SK-N-SH (cell line): ENCODE measurements at regions of chr7 and their contacts with region 1.

Region 1: DNA sequence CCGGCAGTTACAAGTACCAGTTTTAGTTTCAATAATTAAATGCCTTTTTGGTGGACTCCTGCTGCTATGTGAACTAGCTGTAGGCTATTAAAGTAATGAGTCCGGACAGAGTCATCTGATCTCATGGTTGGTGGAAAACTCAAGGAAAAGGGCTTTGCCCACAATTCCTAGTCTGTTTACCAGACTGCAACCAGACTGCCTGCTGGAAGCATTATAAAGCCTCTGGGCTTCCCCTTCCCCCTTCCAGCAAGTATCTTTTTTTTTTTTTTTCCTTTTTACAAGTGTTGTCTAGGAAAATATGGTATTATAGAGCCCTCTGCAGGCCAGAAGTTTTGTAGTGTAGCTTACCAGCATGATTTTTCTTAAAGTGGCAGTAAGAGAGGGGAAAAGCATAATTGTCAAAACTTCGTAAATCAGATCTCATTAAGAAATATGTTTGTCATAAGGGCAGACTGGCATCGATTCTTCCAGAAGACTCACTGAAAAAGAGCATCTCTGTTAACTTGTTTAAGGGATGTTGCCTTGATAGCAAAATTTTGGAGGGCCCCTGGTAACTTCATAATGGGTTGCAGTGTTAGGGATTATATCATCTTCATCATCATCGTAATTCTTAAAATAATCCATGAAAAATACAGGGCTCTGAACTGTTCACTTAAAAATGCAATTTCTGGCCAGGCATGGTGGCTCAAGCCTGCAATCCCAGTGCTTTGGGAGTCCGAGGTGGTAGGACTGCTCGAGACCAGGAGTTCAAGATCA is 181.3 kb downstream of the TAX1BP1 start:
- DNase-seq: peak; percentile 73
- H3K4me3 ChIP-seq: peak overlapping the region in 1 of 2 experiments; percentile 17; a peak in 1 of 4 replicates
- H3K27ac ChIP-seq: peak overlapping the region in 1 of 2 experiments; percentile 43; a peak in 1 of 4 replicates
- H3K4me1 ChIP-seq: peaks cover 0 to 8% of the 10 kb centered on the region in 2 experiments; a peak in 2 of 4 replicates
- H3K27me3 ChIP-seq: no peaks in the 10 kb centered on the region
- CTCF ChIP-seq: peak; percentile 91
- EP300 ChIP-seq: no peak
- RAD21 ChIP-seq: peak; percentile 92

Region 2: DNA sequence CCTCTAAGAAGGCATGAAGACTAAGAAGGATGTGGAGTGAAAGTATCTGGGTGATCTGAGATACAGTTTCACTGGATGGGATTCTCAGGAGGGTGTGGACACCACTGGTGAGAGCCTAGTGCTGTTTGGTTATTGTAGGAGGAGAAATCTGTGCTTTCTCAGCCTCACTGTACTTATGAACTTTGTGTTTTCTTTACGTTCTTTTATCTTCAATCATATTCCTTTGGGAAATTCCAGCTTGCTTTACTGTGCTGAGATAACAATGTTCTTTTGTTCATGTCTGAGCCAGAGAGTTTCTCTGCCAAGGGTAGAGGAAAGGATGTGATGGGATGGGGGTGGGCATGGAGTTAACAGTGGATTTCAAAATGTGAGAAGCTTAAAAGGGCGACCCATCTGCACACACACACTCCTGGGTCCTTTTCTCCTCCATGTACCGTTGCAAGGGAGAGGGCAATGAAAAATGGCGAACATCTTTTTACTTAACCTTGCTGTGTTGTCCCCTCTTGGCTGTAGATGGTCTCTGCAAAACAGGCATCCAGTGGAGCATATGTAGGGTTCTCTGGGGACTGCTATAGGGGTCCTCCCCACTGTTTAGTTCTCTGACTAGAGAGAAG is 206.3 kb before region 1 on chr7:
- CTCF ChIA-PET with region 1: no interaction called
- POLR2A ChIA-PET with region 1: no interaction called
- DNase-seq: no peak
- H3K4me3 ChIP-seq: no peak overlapping the region
- H3K27ac ChIP-seq: peak overlapping the region in 1 of 2 experiments; percentile 79; a peak in 2 of 4 replicates
- H3K4me1 ChIP-seq: peaks cover under 1 to 13% of the 10 kb centered on the region in 2 experiments; a peak in 2 of 4 replicates
- H3K27me3 ChIP-seq: no peaks in the 10 kb centered on the region
- CTCF ChIP-seq: no peak
- EP300 ChIP-seq: peak in 1 of 2 experiments; percentile 66; a peak in 1 of 4 replicates
- RAD21 ChIP-seq: no peak

Region 3: DNA sequence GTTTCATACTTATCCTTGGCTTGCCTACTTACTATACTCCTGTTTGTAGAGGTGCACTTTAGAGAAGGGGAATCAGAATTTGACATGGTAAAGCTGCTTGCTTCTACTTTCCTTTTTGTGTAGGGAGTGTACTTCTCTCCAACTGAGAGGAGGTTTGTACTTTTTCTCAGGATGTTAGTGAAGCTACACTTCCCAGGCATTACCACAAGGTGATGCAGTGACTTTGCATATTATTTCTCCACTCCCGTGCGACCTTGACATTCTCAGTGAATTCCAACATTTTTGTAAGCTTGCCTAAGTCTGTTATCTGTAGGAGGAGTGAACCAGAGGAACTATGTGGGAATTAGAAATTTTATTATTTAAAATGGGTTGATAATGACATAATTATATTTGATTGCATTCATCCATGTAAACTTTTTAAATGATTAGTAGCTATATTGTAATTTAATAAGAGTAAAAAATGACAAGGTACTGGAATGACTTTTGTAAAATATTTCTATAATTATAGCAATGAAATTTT is 176.1 kb before region 1 on chr7:
- CTCF ChIA-PET with region 1: interaction called, 37 read pairs
- POLR2A ChIA-PET with region 1: no interaction called
- DNase-seq: peak; percentile 58
- H3K4me3 ChIP-seq: no peak overlapping the region; a peak in 1 of 4 replicates
- H3K27ac ChIP-seq: peak overlapping the region; percentile 29 to 65
- H3K4me1 ChIP-seq: peaks cover 15 to 29% of the 10 kb centered on the region in 2 experiments; a peak in 3 of 4 replicates
- H3K27me3 ChIP-seq: no peaks in the 10 kb centered on the region
- CTCF ChIP-seq: peak; percentile 89
- EP300 ChIP-seq: no peak
- RAD21 ChIP-seq: peak; percentile 87

Region 4: GRCh38 chr7:27774717-27775328 is 146.4 kb before region 1 on chr7:
- CTCF ChIA-PET with region 1: interaction called, 10 read pairs
- POLR2A ChIA-PET with region 1: no interaction called
- DNase-seq: peak; percentile 9
- H3K4me3 ChIP-seq: no peak overlapping the region
- H3K27ac ChIP-seq: no peak overlapping the region
- H3K4me1 ChIP-seq: peaks cover 0 to 4% of the 10 kb centered on the region in 2 experiments; a peak in 1 of 4 replicates
- H3K27me3 ChIP-seq: no peaks in the 10 kb centered on the region
- CTCF ChIP-seq: peak; percentile 83
- EP300 ChIP-seq: no peak
- RAD21 ChIP-seq: peak; percentile 70

Region 5: GRCh38 chr7:27910326-27910725 is 10.9 kb before region 1 on chr7:
- CTCF ChIA-PET with region 1: interaction called, 26 read pairs
- POLR2A ChIA-PET with region 1: no interaction called
- DNase-seq: no peak
- H3K4me3 ChIP-seq: no peak overlapping the region
- H3K27ac ChIP-seq: no peak overlapping the region
- H3K4me1 ChIP-seq: no peaks in the 10 kb centered on the region
- H3K27me3 ChIP-seq: no peaks in the 10 kb centered on the region
- CTCF ChIP-seq: no peak
- EP300 ChIP-seq: no peak
- RAD21 ChIP-seq: no peak

Region 6: GRCh38 chr7:27940341-27940740 is 19.1 kb after region 1 on chr7:
- CTCF ChIA-PET with region 1: interaction called, 10 read pairs
- POLR2A ChIA-PET with region 1: no interaction called
- DNase-seq: no peak
- H3K4me3 ChIP-seq: no peak overlapping the region
- H3K27ac ChIP-seq: no peak overlapping the region
- H3K4me1 ChIP-seq: peaks cover 0 to 4% of the 10 kb centered on the region in 2 experiments; a peak in 1 of 4 replicates
- H3K27me3 ChIP-seq: no peaks in the 10 kb centered on the region
- CTCF ChIP-seq: no peak
- EP300 ChIP-seq: no peak
- RAD21 ChIP-seq: no peak